ENCODE measurements at regions of chr1 and their contacts with region 1.

Region 1: GRCh38 chr1:239898062-239898730 is 193.5 kb upstream of the FMN2 start:
- DNase-seq: peak; percentile 53 to 76
- ATAC-seq: peak in 7 of 8 donors; percentile 64 to 88 (median 82)
- H3K4me3 ChIP-seq: peak overlapping the region in 3 of 10 donors; percentile 1 to 31 (median 9)
- H3K27ac ChIP-seq: no peak overlapping the region
- H3K4me1 ChIP-seq: peaks cover 0 to 18% (median 4%) of the 10 kb centered on the region in 9 donors
- H3K27me3 ChIP-seq: peaks cover 0 to 25% (median 10%) of the 10 kb centered on the region in 7 donors
- CTCF ChIP-seq: peak; percentile 89 to 96 (median 93)

Region 2: GRCh38 chr1:238252033-238252802 is 1646.0 kb before region 1 on chr1:
- intact Hi-C with region 1: loop called in 4 of 10 experiments (anchors 5 to 10 kb)
- DNase-seq: peak; percentile 15 to 29
- ATAC-seq: peak in 1 of 8 donors; percentile 61
- H3K4me3 ChIP-seq: no peak overlapping the region
- H3K27ac ChIP-seq: no peak overlapping the region
- H3K4me1 ChIP-seq: no peaks in the 10 kb centered on the region
- H3K27me3 ChIP-seq: no peaks in the 10 kb centered on the region
- CTCF ChIP-seq: peak in 8 of 9 donors; percentile 24 to 59 (median 46)

Region 3: DNA sequence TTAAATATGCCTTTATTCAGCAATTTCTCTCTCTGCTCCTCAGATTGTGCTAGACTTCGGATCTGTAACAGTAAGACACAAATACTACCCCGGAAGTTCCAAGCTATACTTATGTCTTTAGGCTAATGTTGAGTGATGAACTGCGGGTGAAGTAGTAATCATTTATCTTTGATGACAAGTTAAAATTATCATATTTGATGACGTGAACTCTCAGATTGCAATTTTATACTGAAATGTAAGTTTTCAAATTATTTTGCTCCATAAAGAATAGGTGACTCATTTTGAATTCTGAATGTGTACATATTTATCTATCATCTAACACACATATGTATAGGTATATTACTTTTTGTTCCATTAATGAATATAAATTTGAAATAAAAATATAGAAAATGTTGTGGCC is 501.2 kb before region 1 on chr1:
- intact Hi-C with region 1: loop called in 3 of 10 experiments (anchors 2 to 10 kb)
- DNase-seq: no peak
- ATAC-seq: no peak
- H3K4me3 ChIP-seq: no peak overlapping the region
- H3K27ac ChIP-seq: no peak overlapping the region
- H3K4me1 ChIP-seq: no peaks in the 10 kb centered on the region
- H3K27me3 ChIP-seq: peaks cover 0 to 29% (median 0%) of the 10 kb centered on the region in 7 donors
- CTCF ChIP-seq: no peak

Region 4: GRCh38 chr1:239413916-239414315 is 484.3 kb before region 1 on chr1:
- intact Hi-C with region 1: loop called in 8 of 10 experiments (anchors 5 to 10 kb)
- DNase-seq: no peak
- ATAC-seq: no peak
- H3K4me3 ChIP-seq: no peak overlapping the region
- H3K27ac ChIP-seq: no peak overlapping the region
- H3K4me1 ChIP-seq: no peaks in the 10 kb centered on the region
- H3K27me3 ChIP-seq: no peaks in the 10 kb centered on the region
- CTCF ChIP-seq: no peak